Gastrocnemius medialis (tissue), 4 donors: ENCODE measurements at regions of chr12 and their contacts with region 1.

Region 1: GRCh38 chr12:109477185-109477962 is at the starts of genes KCTD10 and UBE3B:
- DNase-seq: peak; percentile 73 to 81
- ATAC-seq: peak; percentile 94 to 95
- H3K4me3 ChIP-seq: peak within 1 kb of the TSS; percentile 70 to 96 (median 87)
- H3K27ac ChIP-seq: peak within 1 kb of the TSS; percentile 97 to 99 (median 98)
- H3K4me1 ChIP-seq: peaks cover 26 to 33% of the 10 kb centered on the region in 2 donors
- H3K27me3 ChIP-seq: no peaks in the 10 kb centered on the region
- CTCF ChIP-seq: peak in 3 of 5 experiments; percentile 27 to 35 (median 27)
- POLR2A ChIP-seq: peak; percentile 49 to 54
- total RNA-seq, gene KCTD10: 7.5 to 14.8 (median 10.6) TPM
- total RNA-seq, gene UBE3B: 44.8 to 58.2 (median 55.9) TPM

Region 2: DNA sequence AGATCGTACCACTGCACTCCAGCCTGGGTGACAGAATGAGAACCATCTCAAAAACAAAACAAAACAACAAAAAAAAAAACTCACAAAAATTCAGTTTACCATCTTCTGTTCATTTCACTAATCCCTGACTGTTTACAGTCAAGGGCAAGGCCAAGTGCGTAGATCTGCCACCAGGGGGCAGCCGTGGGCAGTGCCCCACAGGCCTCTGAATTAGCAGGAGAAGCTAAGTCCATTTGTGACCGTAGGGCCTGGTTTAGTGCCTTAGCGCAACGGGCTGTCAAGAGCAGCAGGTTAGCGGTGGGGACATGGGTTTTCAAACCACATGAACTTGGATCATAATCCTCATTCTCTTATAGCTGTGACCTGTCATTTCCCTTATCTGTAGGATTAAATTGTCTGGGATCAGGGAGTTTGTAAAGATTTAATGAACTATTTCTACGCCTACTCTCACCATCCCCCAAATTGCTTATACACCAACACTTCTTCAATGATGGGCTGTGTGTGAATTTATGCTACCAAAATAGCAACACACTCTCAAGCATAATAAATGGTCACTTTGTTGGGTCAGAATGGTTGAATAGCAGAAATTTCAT is 49.2 kb before region 1 on chr12:
- in situ Hi-C with region 1: loop called in 2 of 4 experiments (anchors 5 to 10 kb)
- intact Hi-C with region 1: loop called (anchors 2 kb)
- DNase-seq: peak; percentile 33 to 66
- ATAC-seq: peak; percentile 87 to 93
- H3K4me3 ChIP-seq: no peak overlapping the region
- H3K27ac ChIP-seq: no peak overlapping the region
- H3K4me1 ChIP-seq: peaks cover 0 to 8% of the 10 kb centered on the region in 2 donors
- H3K27me3 ChIP-seq: no peaks in the 10 kb centered on the region
- CTCF ChIP-seq: peak; percentile 70 to 97 (median 80)
- POLR2A ChIP-seq: no peak